Right cardiac atrium (tissue), 5 donors: ENCODE measurements at regions of chr11 and their contacts with region 1.

Region 1: DNA sequence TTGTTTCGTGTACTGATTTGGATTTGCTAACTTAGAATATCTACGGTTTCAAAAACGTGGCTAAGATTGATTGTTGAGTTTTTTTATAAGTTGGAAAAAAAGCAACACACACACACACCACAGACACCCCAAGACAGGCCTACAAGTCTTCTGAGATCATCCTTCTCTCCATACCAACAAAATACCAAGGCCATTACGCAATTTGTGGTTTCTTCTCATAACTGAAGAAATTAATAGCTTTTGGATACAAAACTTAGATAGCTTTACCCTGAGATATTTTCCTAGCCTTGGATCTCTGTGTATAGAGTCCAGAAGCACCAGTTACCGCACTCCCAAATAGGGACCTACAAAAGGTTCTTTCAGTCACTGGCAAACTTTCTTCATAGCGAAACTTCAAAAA is 113.6 kb downstream of the SIK3 start:
- DNase-seq: no peak
- ATAC-seq: peak in 1 of 2 donors; percentile 55
- H3K4me3 ChIP-seq: no peak overlapping the region
- H3K27ac ChIP-seq: peak overlapping the region; percentile 52
- H3K4me1 ChIP-seq: peaks cover 4% of the 10 kb centered on the region
- H3K27me3 ChIP-seq: no peaks in the 10 kb centered on the region

Region 2: GRCh38 chr11:116963813-116964212 is 20.8 kb before region 1 on chr11:
- intact Hi-C with region 1: loop called in 1 of 4 experiments (anchors 2 kb)
- DNase-seq: no peak
- ATAC-seq: peak in 1 of 2 donors; percentile 16
- H3K4me3 ChIP-seq: no peak overlapping the region
- H3K27ac ChIP-seq: no peak overlapping the region
- H3K4me1 ChIP-seq: peaks cover 4% of the 10 kb centered on the region
- H3K27me3 ChIP-seq: no peaks in the 10 kb centered on the region